Calu3 (cell line): ENCODE measurements at regions of chr7 and their contacts with region 1.

Region 1: DNA sequence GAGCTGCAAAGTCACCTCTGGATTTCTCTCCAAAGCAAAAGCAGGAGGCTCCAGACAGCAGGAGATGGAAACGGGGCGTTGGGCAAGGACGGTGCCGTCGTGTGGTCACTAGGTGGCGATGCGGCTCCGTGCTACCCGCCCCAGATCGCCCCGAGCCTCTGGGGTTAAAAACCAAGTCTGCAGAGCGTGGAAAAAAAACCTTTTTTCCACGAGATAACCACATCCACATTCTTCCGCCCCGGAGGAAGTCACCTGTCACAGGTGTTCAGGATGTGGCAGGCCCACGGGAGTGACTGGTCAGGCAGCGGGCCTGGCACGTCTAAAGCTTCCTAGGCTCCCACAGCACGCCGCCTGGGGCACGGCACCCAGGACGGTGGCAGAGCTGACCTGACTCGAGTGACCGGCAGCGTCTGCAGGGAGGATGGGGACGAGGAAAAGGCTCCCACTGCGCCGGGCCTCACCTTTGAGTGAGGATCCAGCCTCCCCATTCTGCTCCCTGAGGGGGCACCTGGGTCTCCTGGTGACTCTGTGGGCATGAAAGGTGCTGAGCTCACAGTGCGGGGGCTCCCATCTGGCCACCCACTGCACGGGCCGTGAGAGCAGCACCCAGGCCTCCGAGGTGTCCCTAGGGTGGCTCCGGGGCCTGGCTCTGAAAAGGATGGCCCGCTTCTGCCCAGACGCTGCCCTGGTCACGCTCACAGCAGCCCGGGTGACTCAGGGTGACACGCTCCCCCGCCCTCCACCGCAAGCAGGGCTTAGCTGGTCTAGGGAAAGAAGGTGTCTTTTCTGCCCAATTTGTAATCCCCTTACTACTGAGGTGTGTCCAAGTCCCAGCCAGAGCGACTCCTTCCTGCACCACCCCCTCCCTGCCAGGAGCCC is 71.3 kb upstream of the TNRC18 start:
- DNase-seq: peak; percentile 91
- H3K4me3 Mint-ChIP-seq: peak overlapping the region; percentile 9
- H3K27ac Mint-ChIP-seq: no peak overlapping the region
- H3K4me1 Mint-ChIP-seq: no peaks in the 10 kb centered on the region
- H3K27me3 Mint-ChIP-seq: no peaks in the 10 kb centered on the region
- CTCF ChIP-seq: peak; percentile 99

Region 2: DNA sequence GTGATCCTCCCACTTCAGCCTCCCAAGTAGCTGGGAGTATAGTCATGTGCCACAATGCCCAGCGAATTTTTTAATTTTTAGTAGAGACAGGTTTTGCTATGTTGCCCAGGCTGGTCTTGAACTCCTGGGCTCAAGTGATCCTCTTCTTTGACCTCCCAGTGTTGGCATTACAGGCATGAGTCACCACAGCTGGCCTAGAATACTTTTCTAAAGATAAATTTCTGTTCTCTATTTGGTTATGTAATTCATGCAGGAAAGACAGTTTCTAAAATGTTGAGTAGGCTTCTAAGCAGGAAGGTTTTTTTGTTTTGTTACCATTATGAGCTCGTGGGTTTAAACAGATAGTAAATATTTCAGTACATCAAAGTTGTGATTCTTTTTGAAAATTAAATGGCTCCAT is 444.2 kb before region 1 on chr7:
- CTCF ChIA-PET with region 1: no interaction called
- intact Hi-C with region 1: no loop called
- DNase-seq: no peak
- H3K4me3 Mint-ChIP-seq: no peak overlapping the region
- H3K27ac Mint-ChIP-seq: no peak overlapping the region
- H3K4me1 Mint-ChIP-seq: no peaks in the 10 kb centered on the region
- H3K27me3 Mint-ChIP-seq: no peaks in the 10 kb centered on the region
- CTCF ChIP-seq: no peak

Region 3: DNA sequence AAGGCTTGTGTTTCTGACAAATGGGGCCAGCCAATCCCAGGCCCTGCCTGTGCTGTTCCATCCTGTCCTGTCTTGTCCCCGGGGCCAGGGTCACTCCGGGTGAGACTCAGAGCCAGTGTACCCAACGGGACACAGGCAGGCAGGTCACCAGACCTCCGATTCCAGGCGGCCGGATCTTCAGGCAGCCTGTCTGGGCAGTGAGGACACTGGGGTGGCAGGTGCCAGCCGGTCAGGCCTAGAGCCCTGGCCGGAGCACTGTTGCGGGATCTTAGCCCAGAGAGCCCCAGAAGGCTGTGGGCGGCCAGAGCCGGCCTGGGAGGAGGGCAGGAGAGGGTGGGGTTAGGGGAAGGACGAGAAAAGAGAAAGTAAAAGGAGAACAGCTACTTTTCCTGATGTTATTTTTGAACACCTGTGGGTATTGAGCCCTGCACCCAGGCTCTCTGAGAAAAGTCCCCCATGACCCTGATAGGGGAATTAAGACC is 63.0 kb after region 1 on chr7:
- CTCF ChIA-PET with region 1: interaction called, 48 read pairs
- intact Hi-C with region 1: no loop called
- DNase-seq: peak; percentile 66
- H3K4me3 Mint-ChIP-seq: peak overlapping the region; percentile 74
- H3K27ac Mint-ChIP-seq: no peak overlapping the region
- H3K4me1 Mint-ChIP-seq: peaks cover 40% of the 10 kb centered on the region
- H3K27me3 Mint-ChIP-seq: no peaks in the 10 kb centered on the region
- CTCF ChIP-seq: no peak

Region 4: DNA sequence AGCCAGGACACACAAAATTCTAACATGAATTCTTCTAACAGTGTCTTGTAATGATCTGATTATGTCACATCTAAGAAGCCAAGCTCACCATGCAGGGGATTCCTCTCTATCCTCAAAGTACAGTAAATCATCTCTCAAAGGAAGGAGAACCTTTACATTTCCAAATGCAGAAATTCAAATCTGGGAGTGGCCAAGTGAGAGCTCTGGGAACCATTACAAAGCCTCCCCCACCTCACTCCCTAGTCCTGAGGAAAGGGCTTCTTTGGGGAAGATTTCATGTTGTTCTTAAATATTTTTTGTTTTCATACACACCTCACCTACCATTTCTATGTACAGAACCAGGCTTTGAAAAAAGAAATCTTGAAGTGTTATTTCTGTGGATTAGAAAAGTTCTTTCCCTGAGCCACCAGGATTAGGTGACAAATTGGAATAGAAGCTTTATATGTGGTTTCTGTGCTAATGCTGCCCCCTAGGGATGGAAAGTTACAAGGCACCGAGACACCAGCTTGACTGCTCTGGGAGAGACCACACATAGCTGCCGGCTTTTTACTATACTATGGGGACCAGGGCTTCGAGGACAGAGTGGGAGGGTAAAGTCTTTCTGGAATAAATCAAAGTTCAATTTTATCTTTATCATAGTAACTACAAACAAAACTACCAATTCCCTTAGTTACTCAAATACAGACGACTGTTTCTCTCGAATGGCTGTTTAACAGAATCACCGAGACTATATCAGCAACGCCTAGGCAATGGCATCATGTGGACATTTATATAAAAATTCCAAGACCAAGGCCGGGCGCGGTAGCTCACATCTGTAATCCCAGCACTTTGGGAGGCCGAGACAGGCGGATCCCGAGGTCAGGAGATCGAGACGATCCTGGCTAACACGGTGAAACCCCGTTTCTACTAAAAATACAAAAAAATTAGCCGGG is 170.4 kb after region 1 on chr7:
- CTCF ChIA-PET with region 1: interaction called, 31 read pairs
- intact Hi-C with region 1: loop called (anchors 1 kb)
- DNase-seq: peak; percentile 88
- H3K4me3 Mint-ChIP-seq: no peak overlapping the region
- H3K27ac Mint-ChIP-seq: no peak overlapping the region
- H3K4me1 Mint-ChIP-seq: peaks cover 10% of the 10 kb centered on the region
- H3K27me3 Mint-ChIP-seq: no peaks in the 10 kb centered on the region
- CTCF ChIP-seq: peak; percentile 87

Region 5: GRCh38 chr7:5677538-5678294 is 182.8 kb after region 1 on chr7:
- CTCF ChIA-PET with region 1: interaction called, 13 read pairs
- intact Hi-C with region 1: loop called (anchors 1 kb)
- DNase-seq: peak; percentile 65
- H3K4me3 Mint-ChIP-seq: no peak overlapping the region
- H3K27ac Mint-ChIP-seq: no peak overlapping the region
- H3K4me1 Mint-ChIP-seq: no peaks in the 10 kb centered on the region
- H3K27me3 Mint-ChIP-seq: no peaks in the 10 kb centered on the region
- CTCF ChIP-seq: peak; percentile 80

Region 6: DNA sequence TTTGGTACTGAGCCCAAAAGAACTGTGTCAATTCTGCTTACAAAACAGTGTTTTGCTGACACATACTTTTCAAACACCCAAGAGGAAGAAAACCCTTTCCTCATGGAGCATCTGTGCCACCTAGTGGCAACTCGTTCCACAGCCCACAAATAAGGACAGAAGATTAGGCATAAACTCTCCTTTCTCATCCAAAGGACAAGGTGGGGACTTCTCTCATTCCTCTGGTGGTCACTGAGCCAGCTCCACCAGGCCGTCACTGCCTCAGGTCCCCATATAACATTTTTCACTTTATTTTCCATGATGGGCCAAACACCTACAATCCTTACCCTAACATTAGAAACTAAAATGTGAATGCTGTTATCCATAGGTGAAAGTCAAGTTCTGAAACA is 209.6 kb after region 1 on chr7:
- CTCF ChIA-PET with region 1: interaction called, 6 read pairs
- intact Hi-C with region 1: loop called (anchors 10 kb)
- DNase-seq: peak; percentile 78
- H3K4me3 Mint-ChIP-seq: no peak overlapping the region
- H3K27ac Mint-ChIP-seq: no peak overlapping the region
- H3K4me1 Mint-ChIP-seq: peaks cover 19% of the 10 kb centered on the region
- H3K27me3 Mint-ChIP-seq: no peaks in the 10 kb centered on the region
- CTCF ChIP-seq: peak; percentile 91